ENCODE measurements at regions of chr1 and their contacts with region 1.

Region 1: GRCh38 chr1:75265792-75266191 is 131.6 kb downstream of the LHX8 start:
- DNase-seq: peak; percentile 10
- H3K4me3 ChIP-seq: no peak overlapping the region
- H3K27ac ChIP-seq: no peak overlapping the region
- H3K4me1 ChIP-seq: no peaks in the 10 kb centered on the region
- H3K27me3 ChIP-seq: no peaks in the 10 kb centered on the region
- CTCF ChIP-seq: peak; percentile 78
- EP300 ChIP-seq: no peak
- RAD21 ChIP-seq: peak; percentile 87

Region 2: GRCh38 chr1:75023005-75023404 is 242.8 kb before region 1 on chr1:
- CTCF ChIA-PET with region 1: no interaction called
- POLR2A ChIA-PET with region 1: no interaction called
- DNase-seq: no peak
- H3K4me3 ChIP-seq: no peak overlapping the region
- H3K27ac ChIP-seq: no peak overlapping the region
- H3K4me1 ChIP-seq: no peaks in the 10 kb centered on the region
- H3K27me3 ChIP-seq: no peaks in the 10 kb centered on the region
- CTCF ChIP-seq: no peak
- EP300 ChIP-seq: no peak
- RAD21 ChIP-seq: no peak

Region 3: DNA sequence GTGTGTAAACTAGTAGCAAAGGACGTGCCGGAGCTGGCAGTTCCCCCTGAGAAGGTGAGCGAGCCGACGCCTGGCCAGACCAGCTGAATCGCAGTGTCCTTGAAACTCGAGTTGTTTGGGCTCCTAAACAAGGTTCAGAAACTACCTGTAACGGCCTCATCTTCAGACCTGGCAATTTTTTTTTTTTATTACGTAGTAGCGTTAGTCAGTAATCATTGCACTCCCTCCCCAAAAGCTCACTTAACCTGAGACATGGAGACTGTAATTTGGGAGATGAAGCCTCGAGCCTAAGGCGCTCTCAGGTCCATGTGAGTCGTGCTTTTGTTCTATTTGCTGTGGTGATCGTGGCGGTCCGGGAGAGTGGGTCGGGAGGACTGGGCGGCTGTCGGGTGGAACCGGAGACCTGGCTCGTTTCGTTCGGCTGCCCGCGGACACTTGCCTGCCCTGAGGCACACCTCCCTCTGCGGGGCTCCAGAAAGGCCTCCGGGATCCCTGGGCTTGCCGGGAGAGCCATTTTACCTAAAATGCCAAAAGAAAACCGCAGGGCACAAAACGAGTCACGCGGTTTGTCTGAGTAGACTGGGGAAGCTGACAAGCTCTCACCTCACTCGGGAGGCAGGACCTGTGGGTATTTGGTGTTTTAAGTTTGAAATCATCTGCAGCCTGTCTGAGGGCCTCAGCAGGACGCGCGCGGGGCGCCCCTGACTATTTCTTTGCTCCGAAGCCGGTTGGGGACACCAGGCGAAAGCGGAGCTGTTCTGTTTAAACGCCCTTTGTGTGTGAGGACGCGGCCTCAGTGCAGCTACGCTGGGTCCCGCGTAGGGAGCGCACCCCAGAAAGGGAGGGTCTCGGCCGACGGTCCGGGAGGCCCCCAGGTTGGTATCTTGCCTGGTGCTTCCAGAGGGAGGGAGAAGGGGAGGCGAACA is 130.9 kb before region 1 on chr1:
- CTCF ChIA-PET with region 1: no interaction called
- POLR2A ChIA-PET with region 1: no interaction called
- DNase-seq: peak; percentile 38
- H3K4me3 ChIP-seq: no peak overlapping the region; a peak in 1 of 4 replicates
- H3K27ac ChIP-seq: no peak overlapping the region
- H3K4me1 ChIP-seq: peaks cover 0 to 21% of the 10 kb centered on the region in 2 experiments; a peak in 2 of 4 replicates
- H3K27me3 ChIP-seq: peaks cover 88% of the 10 kb centered on the region
- CTCF ChIP-seq: no peak
- EP300 ChIP-seq: no peak
- RAD21 ChIP-seq: no peak

Region 4: DNA sequence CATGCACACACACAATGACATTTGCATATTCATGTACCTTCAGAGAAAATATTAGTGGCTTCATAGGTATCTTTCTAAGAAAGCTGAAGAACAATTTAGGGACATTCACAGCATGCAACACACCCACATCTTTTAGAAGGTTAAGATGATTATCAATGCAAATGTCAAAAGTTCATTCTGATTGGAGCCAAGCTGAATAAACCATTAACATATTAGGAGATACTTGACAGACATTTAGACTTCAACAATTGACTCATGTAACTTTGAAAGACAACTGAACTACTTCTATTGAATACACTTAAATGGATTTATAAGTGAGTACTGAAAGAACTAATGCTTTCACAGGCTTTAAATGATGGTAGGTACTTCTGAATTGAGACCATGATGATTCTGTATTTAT is 20.6 kb before region 1 on chr1:
- CTCF ChIA-PET with region 1: interaction called, 22 read pairs
- POLR2A ChIA-PET with region 1: no interaction called
- DNase-seq: no peak
- H3K4me3 ChIP-seq: no peak overlapping the region
- H3K27ac ChIP-seq: no peak overlapping the region
- H3K4me1 ChIP-seq: no peaks in the 10 kb centered on the region
- H3K27me3 ChIP-seq: no peaks in the 10 kb centered on the region
- CTCF ChIP-seq: no peak
- EP300 ChIP-seq: no peak
- RAD21 ChIP-seq: no peak

Region 5: GRCh38 chr1:75423616-75424015 is 157.8 kb after region 1 on chr1:
- CTCF ChIA-PET with region 1: interaction called, 41 read pairs
- POLR2A ChIA-PET with region 1: no interaction called
- DNase-seq: peak; percentile 70
- H3K4me3 ChIP-seq: no peak overlapping the region
- H3K27ac ChIP-seq: peak overlapping the region in 1 of 2 experiments; percentile 83; a peak in 2 of 4 replicates
- H3K4me1 ChIP-seq: peaks cover 0 to 14% of the 10 kb centered on the region in 2 experiments; a peak in 2 of 4 replicates
- H3K27me3 ChIP-seq: no peaks in the 10 kb centered on the region
- CTCF ChIP-seq: peak; percentile 19
- EP300 ChIP-seq: peak in 1 of 2 experiments; percentile 94; a peak in 2 of 4 replicates
- RAD21 ChIP-seq: peak; percentile 74

Region 6: DNA sequence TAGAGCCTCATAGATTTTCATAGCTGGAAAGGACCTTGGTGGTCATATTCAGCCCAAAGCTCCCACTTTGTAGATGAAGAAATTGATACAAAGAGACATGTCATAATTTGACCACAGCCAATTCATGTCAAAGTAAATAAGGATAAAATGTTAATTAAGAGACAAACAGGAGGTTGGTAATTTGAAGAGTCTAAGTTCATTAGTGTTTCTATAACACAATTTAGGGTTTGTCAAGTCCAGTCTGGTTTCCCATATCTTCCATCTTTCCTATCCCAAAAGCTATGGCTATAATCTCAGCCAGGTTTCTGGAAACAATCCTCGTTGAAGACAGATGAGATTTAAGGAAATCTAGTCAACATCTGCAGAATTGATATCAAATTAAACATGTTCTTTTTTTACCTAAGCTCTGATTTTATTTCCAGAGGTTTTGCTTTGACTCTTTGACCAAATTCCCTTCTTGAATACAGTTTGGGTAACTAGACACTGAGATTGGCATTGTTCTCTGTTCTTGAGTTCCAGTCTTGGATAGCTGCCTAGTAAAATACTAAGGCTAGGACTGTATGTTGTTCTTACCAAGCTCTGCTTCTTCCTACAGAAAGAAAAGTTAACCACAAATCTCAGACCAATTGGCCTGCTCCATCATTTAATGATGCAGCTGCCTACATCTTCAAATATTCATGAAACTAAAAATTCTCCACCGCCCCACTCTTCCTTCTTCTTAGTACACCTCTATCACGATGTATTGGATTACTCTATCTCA is 283.1 kb after region 1 on chr1:
- CTCF ChIA-PET with region 1: interaction called, 11 read pairs
- POLR2A ChIA-PET with region 1: no interaction called
- DNase-seq: no peak
- H3K4me3 ChIP-seq: no peak overlapping the region; a peak in 1 of 4 replicates
- H3K27ac ChIP-seq: peak overlapping the region in 1 of 2 experiments; percentile 57; a peak in 1 of 4 replicates
- H3K4me1 ChIP-seq: peaks cover 0 to 4% of the 10 kb centered on the region in 2 experiments; a peak in 2 of 4 replicates
- H3K27me3 ChIP-seq: no peaks in the 10 kb centered on the region
- CTCF ChIP-seq: no peak
- EP300 ChIP-seq: 0 out of 4 replicates have a peak, but pooled peaks of 1 of the 2 experiments have one; percentile 0
- RAD21 ChIP-seq: no peak

Region 7: GRCh38 chr1:75615613-75616435 is 350.0 kb after region 1 on chr1:
- CTCF ChIA-PET with region 1: interaction called, 33 read pairs
- POLR2A ChIA-PET with region 1: no interaction called
- DNase-seq: peak; percentile 88
- H3K4me3 ChIP-seq: peak overlapping the region; percentile 73 to 87
- H3K27ac ChIP-seq: peak overlapping the region in 1 of 2 experiments; percentile 69; a peak in 1 of 4 replicates
- H3K4me1 ChIP-seq: peaks cover 0 to 13% of the 10 kb centered on the region in 2 experiments; a peak in 2 of 4 replicates
- H3K27me3 ChIP-seq: no peaks in the 10 kb centered on the region
- CTCF ChIP-seq: no peak
- EP300 ChIP-seq: no peak
- RAD21 ChIP-seq: no peak

Region 8: GRCh38 chr1:75632350-75632949 is 366.7 kb after region 1 on chr1:
- CTCF ChIA-PET with region 1: interaction called, 81 read pairs
- POLR2A ChIA-PET with region 1: no interaction called
- DNase-seq: peak; percentile 34
- H3K4me3 ChIP-seq: no peak overlapping the region
- H3K27ac ChIP-seq: no peak overlapping the region
- H3K4me1 ChIP-seq: no peaks in the 10 kb centered on the region
- H3K27me3 ChIP-seq: no peaks in the 10 kb centered on the region
- CTCF ChIP-seq: peak; percentile 86
- EP300 ChIP-seq: no peak
- RAD21 ChIP-seq: peak; percentile 89

Measured in SK-N-SH (cell line).